Common myeloid progenitor, CD34-positive (primary cell): ENCODE measurements at regions of chr15 and their contacts with region 1.

Region 1: DNA sequence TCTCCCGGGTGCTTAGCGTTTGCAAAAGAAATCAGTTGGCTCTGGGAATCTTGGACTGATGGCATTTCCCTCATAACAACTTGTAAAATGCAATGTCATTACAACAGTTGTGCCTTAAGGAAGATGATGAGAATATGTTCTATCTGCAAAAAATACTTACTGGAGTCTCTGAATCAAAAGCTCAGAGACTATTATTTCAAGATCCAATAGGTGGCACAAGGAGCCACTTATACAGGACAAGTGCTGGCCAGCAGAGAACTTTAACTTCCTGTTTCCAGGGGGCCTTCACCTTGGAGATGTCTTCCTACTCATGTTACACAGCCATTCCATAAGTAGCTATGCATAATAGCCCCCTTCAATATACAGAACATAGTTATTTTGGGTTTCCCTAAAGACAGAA is 8.9 kb upstream of the RPS27L start:
- DNase-seq: peak in 2 of 3 donors; percentile 54 to 62
- H3K4me3 ChIP-seq: no peak overlapping the region
- H3K27ac ChIP-seq: no peak overlapping the region
- H3K4me1 ChIP-seq: peaks cover 0 to 2% (median 0%) of the 10 kb centered on the region in 4 experiments
- H3K27me3 ChIP-seq: no peaks in the 10 kb centered on the region

Region 2: DNA sequence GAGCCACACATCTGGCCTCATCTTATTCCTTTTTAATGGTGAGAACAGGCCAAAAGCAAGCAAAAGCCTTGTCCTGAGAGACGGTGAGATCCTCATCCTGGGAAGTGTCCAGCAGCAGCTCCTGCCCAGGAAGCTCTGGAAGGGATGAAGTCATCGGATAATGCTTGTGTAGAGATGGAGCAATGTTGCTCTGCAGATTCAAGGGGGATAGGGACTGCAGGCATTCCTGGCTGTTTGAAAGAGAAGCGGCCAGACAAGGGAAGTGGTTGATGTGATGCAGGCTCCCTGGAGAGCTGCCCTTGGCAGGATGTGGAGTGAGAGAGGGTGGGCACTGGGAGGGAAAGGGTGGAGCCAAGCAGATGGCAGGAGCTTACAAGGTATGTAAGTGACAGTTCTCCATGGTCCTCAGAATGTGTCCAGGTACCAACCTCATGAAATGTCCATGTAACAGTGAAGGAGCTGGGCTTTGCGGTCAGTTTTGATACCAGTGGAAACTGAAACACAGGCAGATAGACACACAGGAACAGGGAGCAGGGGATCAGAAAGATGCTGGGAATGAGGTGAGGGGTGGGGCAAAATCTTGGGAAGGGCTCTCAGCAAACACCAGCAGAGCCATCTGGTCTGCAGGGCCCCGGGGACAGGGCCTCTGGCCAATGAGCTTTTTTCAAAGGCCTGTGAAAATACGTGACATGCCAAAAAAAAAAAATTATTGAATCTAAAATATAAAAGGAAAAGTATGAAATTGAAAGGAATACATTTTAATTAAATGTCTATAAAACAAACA is 76.8 kb before region 1 on chr15:
- CTCF ChIA-PET with region 1: no interaction called
- POLR2A ChIA-PET with region 1: no interaction called
- DNase-seq: no peak
- H3K4me3 ChIP-seq: no peak overlapping the region
- H3K27ac ChIP-seq: no peak overlapping the region
- H3K4me1 ChIP-seq: peaks cover 0 to 17% (median 6%) of the 10 kb centered on the region in 4 experiments
- H3K27me3 ChIP-seq: no peaks in the 10 kb centered on the region

Region 3: DNA sequence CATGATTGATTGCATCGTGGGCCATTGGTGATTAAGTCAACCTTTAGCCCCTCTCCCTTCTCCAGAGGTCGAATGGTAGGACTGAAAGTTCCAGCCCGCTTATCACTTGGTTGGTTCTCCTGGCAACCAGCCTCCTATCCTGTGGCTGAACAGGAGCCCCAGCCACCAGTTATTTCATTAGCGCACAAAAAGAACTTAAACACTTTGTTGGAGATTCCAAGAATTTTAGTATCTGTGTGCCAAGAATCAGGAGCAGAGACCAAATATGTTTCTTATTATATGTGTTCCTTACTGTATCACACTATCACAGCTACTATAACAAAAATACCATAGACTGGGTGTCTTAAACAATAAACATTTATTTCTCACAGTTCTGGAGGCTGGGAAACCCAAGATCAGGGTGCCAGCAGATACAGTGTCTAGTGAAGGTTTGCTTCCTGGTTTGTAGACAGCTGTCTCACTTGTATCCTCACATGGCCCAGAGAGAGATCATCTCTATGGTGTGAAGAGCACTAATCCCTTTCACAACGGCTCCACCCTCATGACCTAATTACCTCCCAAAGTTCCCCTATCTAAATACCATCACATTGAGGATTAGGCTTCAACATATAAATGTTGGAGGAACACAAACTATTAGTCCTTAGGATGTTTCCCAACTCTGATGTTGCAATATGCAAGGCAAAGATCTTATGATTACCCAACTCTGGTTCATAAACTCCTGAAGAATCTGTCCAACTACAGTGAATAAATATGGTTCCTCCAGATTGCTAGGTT is 80.7 kb after region 1 on chr15:
- CTCF ChIA-PET with region 1: interaction called, 12 read pairs
- POLR2A ChIA-PET with region 1: no interaction called
- DNase-seq: no peak
- H3K4me3 ChIP-seq: no peak overlapping the region
- H3K27ac ChIP-seq: no peak overlapping the region
- H3K4me1 ChIP-seq: peaks cover 0 to 7% (median under 1%) of the 10 kb centered on the region in 4 experiments
- H3K27me3 ChIP-seq: no peaks in the 10 kb centered on the region